Activated naive CD4-positive, alpha-beta T cell treated with anti-CD3 and anti-CD28 coated beads for 36 hours (primary cell): ENCODE measurements at regions of chr20 and their contacts with region 1.

Region 1: GRCh38 chr20:34704177-34705007 is at the start of gene TP53INP2:
- DNase-seq: peak; percentile 81
- H3K4me3 Mint-ChIP-seq: peak within 1 kb of the TSS; percentile 90
- H3K27ac Mint-ChIP-seq: peak within 1 kb of the TSS; percentile 13
- H3K4me1 Mint-ChIP-seq: peaks cover 10% of the 10 kb centered on the region
- H3K27me3 Mint-ChIP-seq: peaks cover 6% of the 10 kb centered on the region
- total RNA-seq, gene TP53INP2: 1.9 TPM

Region 2: GRCh38 chr20:34302723-34303528 is 401.5 kb before region 1 on chr20 and contains the start of gene AHCY:
- CTCF ChIA-PET with region 1: no interaction called
- intact Hi-C with region 1: loop called (anchors 2 kb)
- DNase-seq: peak; percentile 95
- H3K4me3 Mint-ChIP-seq: peak within 1 kb of the TSS; percentile 84
- H3K27ac Mint-ChIP-seq: peak within 1 kb of the TSS; percentile 86
- H3K4me1 Mint-ChIP-seq: peaks cover 4% of the 10 kb centered on the region
- H3K27me3 Mint-ChIP-seq: no peaks in the 10 kb centered on the region
- total RNA-seq, gene AHCY: 258 to 261 TPM

Region 3: DNA sequence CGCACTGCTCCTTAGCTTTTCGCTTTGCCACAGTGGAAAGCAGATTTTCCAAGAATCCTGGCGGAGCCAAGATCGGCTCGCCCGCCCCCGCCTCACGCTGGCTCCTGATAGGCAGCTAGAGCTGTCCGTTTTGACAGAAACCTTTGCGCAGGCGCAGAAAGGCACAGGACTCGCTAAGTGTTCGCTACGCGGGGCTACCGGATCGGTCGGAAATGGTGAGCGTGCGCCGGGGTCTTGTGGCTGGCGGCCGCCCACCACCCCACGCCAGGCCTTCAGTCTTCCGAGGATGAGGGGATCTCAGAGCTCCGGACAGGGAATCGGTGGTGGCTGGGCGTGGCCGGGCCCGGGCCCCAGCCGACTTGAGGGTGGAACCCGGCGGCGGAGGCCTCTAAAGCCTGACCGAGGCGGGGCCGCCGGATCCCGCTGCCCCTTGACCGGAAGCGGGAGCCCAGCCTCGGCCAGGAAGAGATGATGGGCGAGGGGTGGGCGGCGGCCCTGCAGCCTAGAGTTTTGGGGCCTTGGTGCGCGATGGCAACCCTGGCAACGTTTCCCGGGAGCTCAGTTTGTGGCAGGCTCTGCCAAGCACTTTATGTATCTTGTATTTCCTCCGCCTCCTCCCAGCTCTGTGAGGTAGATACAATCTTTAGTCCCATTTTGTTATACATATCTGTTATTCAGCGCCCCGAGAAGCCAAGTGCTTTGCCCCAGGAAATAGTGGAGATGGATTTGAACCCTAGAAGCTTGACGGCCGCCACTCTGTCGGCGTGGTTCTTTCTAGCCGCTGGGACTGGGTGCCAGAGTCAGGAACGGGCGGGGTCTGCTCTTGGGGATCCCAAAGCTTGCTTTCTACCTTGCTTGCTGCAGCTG is 187.9 kb before region 1 on chr20 and contains the start of gene DYNLRB1:
- CTCF ChIA-PET with region 1: interaction called, 7 read pairs
- intact Hi-C with region 1: loop called (anchors 1 kb)
- DNase-seq: peak; percentile 96
- H3K4me3 Mint-ChIP-seq: peak within 1 kb of the TSS; percentile 98
- H3K27ac Mint-ChIP-seq: peak within 1 kb of the TSS; percentile 96
- H3K4me1 Mint-ChIP-seq: peaks cover 29% of the 10 kb centered on the region
- H3K27me3 Mint-ChIP-seq: no peaks in the 10 kb centered on the region
- total RNA-seq, gene DYNLRB1: 81.9 to 92.9 TPM

Region 4: GRCh38 chr20:34558320-34559218 is 145.8 kb before region 1 on chr20 and contains the start of gene MAP1LC3A:
- CTCF ChIA-PET with region 1: interaction called, 17 read pairs
- intact Hi-C with region 1: loop called (anchors 1 kb)
- DNase-seq: peak; percentile 90
- H3K4me3 Mint-ChIP-seq: peak within 1 kb of the TSS; percentile 81
- H3K27ac Mint-ChIP-seq: peak within 1 kb of the TSS; percentile 81
- H3K4me1 Mint-ChIP-seq: peaks cover 11% of the 10 kb centered on the region
- H3K27me3 Mint-ChIP-seq: no peaks in the 10 kb centered on the region
- total RNA-seq, gene MAP1LC3A: 1.6 to 1.7 TPM

Region 5: DNA sequence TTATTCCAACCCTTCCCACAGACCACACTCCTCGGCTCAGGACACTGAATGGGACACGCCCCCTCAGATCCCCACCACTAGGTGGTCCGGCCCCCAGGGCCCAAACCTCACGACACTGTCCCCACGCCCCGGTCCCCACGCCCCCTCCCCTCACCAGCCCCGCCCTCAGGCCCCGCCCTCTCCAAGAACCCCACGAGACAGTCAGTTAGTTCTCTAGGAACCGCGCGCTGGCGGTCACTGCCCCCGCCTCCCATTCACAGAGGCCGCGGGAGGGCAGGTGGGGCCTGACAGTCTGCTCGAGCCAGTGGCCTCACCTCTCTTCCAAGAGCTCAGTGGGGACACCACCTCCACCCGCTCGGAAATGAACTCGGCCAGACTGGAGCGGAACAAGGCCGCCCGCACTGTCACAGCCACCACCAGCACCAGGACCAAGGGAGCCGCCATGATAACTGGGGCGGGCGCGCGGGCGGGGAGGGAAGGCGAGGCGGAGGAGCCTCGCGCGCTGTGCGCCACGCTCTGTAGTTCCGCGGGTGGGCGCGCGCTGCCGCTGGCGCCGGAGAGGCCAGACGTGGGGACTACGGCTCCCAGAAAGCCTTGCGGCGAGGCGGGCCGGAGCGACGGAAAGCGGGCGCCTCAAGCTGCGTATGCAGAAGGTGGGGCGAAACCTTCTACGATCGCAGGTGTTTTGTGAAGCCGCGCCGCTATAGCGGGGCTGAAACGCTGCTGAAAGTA is 27.6 kb before region 1 on chr20 and contains the start of gene PIGU:
- CTCF ChIA-PET with region 1: interaction called, 5 read pairs
- intact Hi-C with region 1: loop called (anchors 1 kb)
- DNase-seq: peak; percentile 97
- H3K4me3 Mint-ChIP-seq: peak within 1 kb of the TSS; percentile 97
- H3K27ac Mint-ChIP-seq: peak within 1 kb of the TSS; percentile 90
- H3K4me1 Mint-ChIP-seq: peaks cover 29% of the 10 kb centered on the region
- H3K27me3 Mint-ChIP-seq: no peaks in the 10 kb centered on the region
- total RNA-seq, gene PIGU: 18.8 to 18.9 TPM

Region 6: GRCh38 chr20:34825530-34826362 is 121.4 kb after region 1 on chr20 and contains the start of gene NCOA6:
- CTCF ChIA-PET with region 1: no interaction called
- intact Hi-C with region 1: loop called (anchors 2 kb)
- DNase-seq: peak; percentile 88
- H3K4me3 Mint-ChIP-seq: peak within 1 kb of the TSS; percentile 97
- H3K27ac Mint-ChIP-seq: peak within 1 kb of the TSS; percentile 93
- H3K4me1 Mint-ChIP-seq: peaks cover 37% of the 10 kb centered on the region
- H3K27me3 Mint-ChIP-seq: no peaks in the 10 kb centered on the region
- total RNA-seq, gene NCOA6: 13.9 to 14.1 TPM